Left cardiac atrium (tissue), 4 donors: ENCODE measurements at regions of chrX and their contacts with region 1.

Region 1: DNA sequence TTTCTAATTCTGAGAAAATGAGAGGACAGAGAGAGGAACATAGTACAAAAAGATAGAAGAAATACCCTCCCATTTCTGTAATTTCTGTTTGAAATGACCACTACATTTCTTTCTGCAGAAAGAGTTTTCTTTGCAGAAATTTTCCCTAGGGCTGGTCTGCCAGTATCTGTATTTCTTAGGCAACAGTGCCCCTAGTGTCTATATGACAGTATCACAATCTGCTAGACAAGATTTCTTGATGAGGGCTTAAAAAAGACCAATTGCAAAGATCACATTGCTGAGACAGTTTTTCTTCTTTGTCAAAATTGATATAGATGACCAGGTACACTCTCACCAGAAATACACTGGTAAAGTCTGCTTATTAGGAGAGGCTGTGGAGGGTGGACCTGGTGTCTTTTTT is 81.0 kb upstream of the ZDHHC15 start:
- DNase-seq: no peak
- ATAC-seq: no peak

Region 2: GRCh38 chrX:75045369-75045768 is 558.5 kb before region 1 on chrX:
- intact Hi-C with region 1: loop called in 1 of 2 experiments (anchors 10 kb)
- DNase-seq: no peak
- ATAC-seq: no peak

Region 3: DNA sequence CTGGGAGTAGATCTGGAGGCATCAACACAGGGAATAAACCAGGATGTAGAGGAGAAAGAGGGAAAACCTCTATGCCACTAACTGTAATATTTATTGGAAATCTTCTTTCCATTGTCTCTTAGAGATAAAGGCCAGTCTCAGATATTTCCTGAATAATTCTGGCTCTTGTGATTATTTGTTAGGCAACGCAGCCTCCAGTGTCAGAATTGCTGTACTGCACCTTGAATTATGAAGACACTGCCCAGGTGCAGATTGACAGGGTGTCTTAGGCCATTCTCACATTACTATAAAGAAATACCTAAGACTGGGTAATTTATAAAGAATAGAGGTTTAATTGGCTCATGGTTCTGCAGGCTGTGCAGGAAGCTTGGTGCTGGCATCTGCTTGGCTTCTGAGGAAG is 19.7 kb after region 1 on chrX:
- intact Hi-C with region 1: no loop called
- DNase-seq: no peak
- ATAC-seq: no peak